Sciatic nerve (tissue), 2 donors: ENCODE measurements at regions of chr17 and their contacts with region 1.

Region 1: GRCh38 chr17:61064078-61064951 is 335.3 kb upstream of the TBX2 start:
- DNase-seq: no peak
- ATAC-seq: no peak

Region 2: DNA sequence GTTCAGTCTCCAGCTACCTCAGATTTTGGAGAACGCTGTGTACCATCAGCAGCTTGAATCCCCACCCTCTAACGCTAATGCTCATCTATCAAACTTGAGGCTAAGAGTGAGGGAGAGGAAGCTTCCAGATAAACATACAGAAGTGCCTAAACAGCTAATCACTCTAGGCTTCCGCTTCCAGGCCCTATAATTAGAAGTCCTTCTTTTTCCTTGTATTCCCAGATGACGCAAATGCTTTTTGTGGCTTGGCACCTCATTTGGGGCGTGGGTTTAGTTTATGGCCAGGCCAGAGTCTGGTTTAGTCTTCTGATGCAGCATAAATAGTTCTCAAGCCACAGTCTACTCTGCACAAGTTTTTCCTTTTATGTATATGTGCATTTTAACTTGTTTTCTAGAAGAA is 123.3 kb before region 1 on chr17:
- intact Hi-C with region 1: no loop called
- DNase-seq: peak; percentile 66
- ATAC-seq: peak; percentile 93

Region 3: DNA sequence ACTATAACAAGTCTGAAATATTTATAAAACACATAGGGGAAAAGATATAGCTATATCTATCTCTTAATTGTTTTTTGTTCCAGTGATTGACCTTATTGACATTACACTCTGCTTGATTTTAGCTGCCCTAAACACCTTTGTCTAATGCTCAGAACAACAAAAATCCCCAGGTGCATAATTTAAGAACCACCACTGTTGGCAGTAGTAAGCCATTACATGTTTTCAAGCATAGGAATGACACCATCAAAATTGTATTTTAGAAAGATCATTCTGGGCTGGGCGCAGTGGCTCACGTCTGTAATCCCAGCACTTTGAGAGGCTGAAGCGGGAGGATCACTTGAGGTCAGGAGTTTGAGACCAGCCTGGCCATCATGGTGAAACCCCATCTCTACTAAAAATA is 22.0 kb before region 1 on chr17:
- intact Hi-C with region 1: loop called (anchors 1 kb)
- DNase-seq: no peak
- ATAC-seq: no peak